Dorsolateral prefrontal cortex (tissue), 120 donors: ENCODE measurements at regions of chr15 and their contacts with region 1.

Region 1: DNA sequence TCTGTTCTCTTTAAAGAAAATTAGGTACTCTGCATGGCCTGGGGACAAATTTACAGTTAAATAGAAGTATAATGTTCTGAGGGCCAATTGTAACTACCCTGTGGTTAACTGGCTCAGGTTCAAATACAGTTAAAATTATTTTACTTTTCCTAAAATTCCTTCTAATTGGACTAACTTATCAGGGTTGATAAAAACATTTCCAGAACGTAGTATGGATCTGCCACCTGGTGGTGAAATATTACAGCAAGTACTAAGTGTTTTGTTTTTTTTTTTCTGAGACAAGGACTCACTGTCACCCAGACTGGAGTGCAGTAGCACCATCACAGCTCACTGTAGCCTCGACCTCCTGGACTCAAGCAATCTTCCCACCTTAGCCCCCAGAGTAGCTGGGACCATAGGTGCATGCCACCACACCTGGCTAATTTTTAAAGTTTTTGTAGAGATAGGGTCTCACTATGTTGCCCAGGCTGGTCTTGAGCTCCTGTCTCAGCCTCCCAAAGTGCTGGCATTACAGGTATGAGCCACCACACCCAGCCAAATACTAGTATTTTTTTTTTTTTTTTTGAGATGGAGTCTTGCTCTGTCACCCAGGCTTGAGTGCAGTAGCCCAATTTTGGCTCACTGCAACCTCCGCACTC is 29.2 kb downstream of the NEO1 start:
- DNase-seq: peak in 1 of 10 donors; percentile 32
- H3K4me3 ChIP-seq: peak overlapping the region in 1 of 59 donors; percentile 12
- H3K27ac ChIP-seq: peak overlapping the region in 41 of 59 donors; percentile 2 to 94 (median 52)
- H3K27me3 ChIP-seq: no peaks in the 10 kb centered on the region
- CTCF ChIP-seq: peak; percentile 63 to 99 (median 82)

Region 2: GRCh38 chr15:72796515-72797337 is 284.7 kb before region 1 on chr15:
- intact Hi-C with region 1: loop called (anchors 1 to 2 kb)
- DNase-seq: peak in 6 of 10 donors; percentile 8 to 67 (median 34)
- H3K4me3 ChIP-seq: peak overlapping the region; percentile 29 to 77 (median 63)
- H3K27ac ChIP-seq: peak overlapping the region in 4 of 59 donors; percentile 36 to 67 (median 58)
- H3K27me3 ChIP-seq: no peaks in the 10 kb centered on the region
- CTCF ChIP-seq: peak in 53 of 56 donors; percentile 18 to 84 (median 62)

Region 3: DNA sequence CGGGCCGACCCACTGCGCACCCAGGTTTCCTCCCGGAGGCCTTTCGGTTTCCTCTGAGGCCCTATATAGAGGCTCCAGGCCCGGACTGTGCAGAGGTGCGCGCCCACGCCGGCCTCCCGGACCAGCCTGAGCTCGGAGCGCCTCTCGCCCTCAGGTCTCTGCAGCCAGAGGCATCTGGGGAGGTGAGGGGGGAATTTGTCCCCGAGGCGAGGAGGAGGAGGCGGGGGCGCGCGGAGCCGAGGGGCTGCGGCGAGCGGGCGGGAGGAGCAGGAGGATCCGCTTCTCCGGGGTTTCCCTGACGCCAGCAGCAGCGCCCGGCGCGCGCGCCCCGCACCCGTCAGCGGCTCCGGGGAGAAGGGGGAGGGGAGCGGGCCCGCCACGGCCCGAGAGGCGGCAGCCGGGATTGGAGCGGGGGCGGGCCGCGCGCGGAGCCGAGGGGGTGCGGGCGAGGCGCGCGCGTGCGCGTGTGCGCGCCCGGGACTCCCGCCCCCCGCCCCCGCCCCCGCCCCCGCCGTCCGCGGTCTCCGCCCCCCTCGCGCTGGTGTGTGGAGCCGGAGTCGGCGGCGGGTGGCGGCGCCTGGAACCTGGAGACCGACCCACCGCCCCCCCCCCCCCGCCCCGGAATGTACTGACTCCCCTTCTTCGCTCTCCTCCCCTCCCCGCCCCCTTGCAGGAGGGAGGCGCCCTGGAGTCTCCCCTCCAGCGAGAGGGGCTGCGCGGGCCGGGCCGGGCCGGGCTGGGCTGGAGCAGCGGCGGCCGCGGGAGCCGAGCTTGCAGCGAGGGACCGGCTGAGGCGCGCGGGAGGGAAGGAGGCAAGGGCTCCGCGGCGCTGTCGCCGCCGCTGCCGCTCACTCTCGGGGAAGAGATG is 29.4 kb before region 1 on chr15 and contains the start of gene NEO1:
- intact Hi-C with region 1: loop called (anchors 1 to 2 kb)
- DNase-seq: peak; percentile 77 to 93 (median 87)
- H3K4me3 ChIP-seq: peak within 1 kb of the TSS; percentile 71 to 92 (median 80)
- H3K27ac ChIP-seq: peak within 1 kb of the TSS; percentile 80 to 100 (median 99)
- H3K27me3 ChIP-seq: no peaks in the 10 kb centered on the region
- CTCF ChIP-seq: peak in 1 of 56 donors; percentile 26
- total RNA-seq, gene NEO1: 53.3 to 164 (median 83.2) TPM